Prostate gland (tissue), 2 donors: ENCODE measurements at regions of chr14 and their contacts with region 1.

Region 1: DNA sequence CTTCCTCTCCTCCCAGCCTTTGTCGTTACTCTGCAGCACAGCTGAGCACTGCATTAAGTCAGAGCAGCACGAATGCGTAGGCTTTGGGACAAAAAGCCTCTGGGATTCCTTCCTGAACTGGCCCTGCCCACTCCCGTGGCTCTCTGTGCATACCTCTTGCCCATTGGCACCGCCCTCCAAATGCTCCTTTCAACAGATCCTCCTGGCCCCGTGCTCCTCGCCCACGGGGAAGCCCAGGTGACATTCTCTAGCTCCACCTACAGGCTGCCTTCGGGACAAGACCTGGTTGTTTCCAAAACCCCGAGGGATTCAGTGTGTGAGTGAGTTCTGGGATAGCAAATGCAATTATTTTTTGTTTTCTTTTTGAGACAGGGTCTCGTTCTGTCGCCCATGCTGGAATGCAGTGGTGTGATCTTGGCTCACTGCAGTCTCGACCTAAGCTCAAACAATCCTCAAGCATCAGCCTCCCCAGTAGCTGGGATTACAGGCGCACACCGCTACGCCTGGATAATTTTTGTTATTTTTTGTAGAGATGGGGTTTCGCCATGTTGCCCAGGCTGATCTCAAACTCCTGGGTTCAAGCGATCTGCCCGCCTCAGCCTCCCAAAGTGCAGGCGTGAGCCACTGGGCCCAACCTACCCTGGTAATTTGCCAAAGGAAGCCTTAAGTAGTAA is 17.9 kb upstream of the TDRD9 start:
- DNase-seq: peak; percentile 95
- H3K4me3 ChIP-seq: no peak overlapping the region
- H3K27ac ChIP-seq: peak overlapping the region in 1 of 2 donors; percentile 54
- H3K4me1 ChIP-seq: peaks cover 3% of the 10 kb centered on the region
- H3K27me3 ChIP-seq: no peaks in the 10 kb centered on the region
- CTCF ChIP-seq: peak; percentile 79 to 97 (median 92)
- POLR2A ChIP-seq: no peak

Region 2: GRCh38 chr14:103576371-103577024 is 333.9 kb before region 1 on chr14:
- intact Hi-C with region 1: loop called (anchors 10 kb)
- DNase-seq: peak; percentile 92
- H3K4me3 ChIP-seq: no peak overlapping the region
- H3K27ac ChIP-seq: peak overlapping the region; percentile 62 to 77
- H3K4me1 ChIP-seq: peaks cover 14% of the 10 kb centered on the region
- H3K27me3 ChIP-seq: no peaks in the 10 kb centered on the region
- CTCF ChIP-seq: no peak
- POLR2A ChIP-seq: no peak

Region 3: DNA sequence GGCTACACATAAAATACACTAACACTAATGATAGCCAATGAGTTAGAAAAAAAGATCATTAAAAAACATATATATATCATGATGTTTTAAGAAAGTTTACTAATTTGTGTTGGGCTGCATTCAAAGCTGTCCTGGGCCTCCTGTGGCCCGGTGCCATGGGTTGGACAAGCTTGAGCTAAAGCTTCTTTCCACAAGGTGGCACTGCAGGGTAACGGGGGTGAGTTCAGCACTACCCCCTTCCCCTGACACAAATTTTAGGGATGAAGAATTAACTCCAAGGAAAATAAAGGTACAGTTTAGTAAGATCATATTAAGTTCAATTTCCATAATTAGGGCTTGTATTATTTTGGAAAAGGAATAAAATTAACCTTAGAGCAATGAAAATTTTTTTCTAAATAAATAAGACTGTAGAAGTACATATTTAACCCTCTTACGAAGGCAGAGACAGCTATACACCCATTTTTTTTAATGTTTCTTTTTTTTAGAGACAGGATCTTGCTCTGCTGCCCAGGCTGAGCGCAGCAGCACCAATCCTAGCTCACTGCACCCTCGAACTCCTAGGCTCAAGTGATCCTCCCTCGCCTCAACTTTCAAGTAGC is 101.9 kb before region 1 on chr14:
- intact Hi-C with region 1: loop called (anchors 1 kb)
- DNase-seq: peak; percentile 86
- H3K4me3 ChIP-seq: no peak overlapping the region
- H3K27ac ChIP-seq: no peak overlapping the region
- H3K4me1 ChIP-seq: peaks cover 4% of the 10 kb centered on the region
- H3K27me3 ChIP-seq: no peaks in the 10 kb centered on the region
- CTCF ChIP-seq: peak; percentile 53 to 93 (median 89)
- POLR2A ChIP-seq: no peak